ENCODE measurements at regions of chr16 and their contacts with region 1.

Region 1: DNA sequence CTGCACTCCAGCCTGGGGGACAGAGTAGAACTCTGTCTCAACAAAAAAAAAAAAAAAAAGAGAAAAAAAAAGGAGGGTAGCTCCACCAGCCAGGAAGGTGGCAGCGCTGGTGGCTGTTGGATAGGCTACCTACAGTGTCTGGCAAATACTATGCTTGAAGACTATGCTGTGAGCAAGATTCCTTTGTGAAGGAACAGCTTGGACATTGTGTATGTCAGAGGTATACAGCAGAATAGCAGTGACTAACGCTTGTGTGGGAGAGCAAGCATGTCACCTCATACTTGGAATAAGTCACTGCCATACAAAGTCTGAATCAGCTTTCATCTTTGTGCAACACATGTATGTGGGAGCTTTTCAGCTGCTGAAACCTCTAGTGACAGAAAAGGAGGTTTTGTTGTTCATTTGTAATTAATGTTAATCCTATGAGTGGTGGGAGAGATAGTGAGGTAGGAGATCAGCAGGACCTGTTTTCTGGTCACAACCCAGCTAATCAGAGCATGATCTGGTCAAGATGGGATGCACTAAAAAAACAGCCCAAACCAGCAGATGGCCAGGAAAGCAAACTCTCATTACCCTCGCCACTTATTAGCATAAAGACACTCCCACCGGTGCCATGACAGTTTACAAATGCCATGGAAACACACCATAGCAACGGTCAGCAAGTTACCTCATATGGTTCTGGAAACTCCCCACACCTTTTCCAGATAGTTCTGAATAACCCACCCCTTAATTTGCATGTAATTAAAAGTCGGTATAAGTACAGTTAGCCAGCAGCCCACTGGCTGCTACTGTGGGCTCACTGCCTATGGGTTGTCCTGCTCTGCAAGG is 6.8 kb upstream of the ITGAD start:
- DNase-seq: no peak
- H3K4me3 Mint-ChIP-seq: no peak overlapping the region
- H3K27ac Mint-ChIP-seq: peak overlapping the region; percentile 38
- H3K4me1 Mint-ChIP-seq: peaks cover 37% of the 10 kb centered on the region
- H3K27me3 Mint-ChIP-seq: peaks cover 6% of the 10 kb centered on the region

Region 2: GRCh38 chr16:31253642-31254045 is 132.7 kb before region 1 on chr16:
- intact Hi-C with region 1: no loop called
- DNase-seq: peak; percentile 34
- H3K4me3 Mint-ChIP-seq: peak overlapping the region; percentile 72
- H3K27ac Mint-ChIP-seq: peak overlapping the region; percentile 93
- H3K4me1 Mint-ChIP-seq: peaks cover 42% of the 10 kb centered on the region
- H3K27me3 Mint-ChIP-seq: no peaks in the 10 kb centered on the region

Region 3: DNA sequence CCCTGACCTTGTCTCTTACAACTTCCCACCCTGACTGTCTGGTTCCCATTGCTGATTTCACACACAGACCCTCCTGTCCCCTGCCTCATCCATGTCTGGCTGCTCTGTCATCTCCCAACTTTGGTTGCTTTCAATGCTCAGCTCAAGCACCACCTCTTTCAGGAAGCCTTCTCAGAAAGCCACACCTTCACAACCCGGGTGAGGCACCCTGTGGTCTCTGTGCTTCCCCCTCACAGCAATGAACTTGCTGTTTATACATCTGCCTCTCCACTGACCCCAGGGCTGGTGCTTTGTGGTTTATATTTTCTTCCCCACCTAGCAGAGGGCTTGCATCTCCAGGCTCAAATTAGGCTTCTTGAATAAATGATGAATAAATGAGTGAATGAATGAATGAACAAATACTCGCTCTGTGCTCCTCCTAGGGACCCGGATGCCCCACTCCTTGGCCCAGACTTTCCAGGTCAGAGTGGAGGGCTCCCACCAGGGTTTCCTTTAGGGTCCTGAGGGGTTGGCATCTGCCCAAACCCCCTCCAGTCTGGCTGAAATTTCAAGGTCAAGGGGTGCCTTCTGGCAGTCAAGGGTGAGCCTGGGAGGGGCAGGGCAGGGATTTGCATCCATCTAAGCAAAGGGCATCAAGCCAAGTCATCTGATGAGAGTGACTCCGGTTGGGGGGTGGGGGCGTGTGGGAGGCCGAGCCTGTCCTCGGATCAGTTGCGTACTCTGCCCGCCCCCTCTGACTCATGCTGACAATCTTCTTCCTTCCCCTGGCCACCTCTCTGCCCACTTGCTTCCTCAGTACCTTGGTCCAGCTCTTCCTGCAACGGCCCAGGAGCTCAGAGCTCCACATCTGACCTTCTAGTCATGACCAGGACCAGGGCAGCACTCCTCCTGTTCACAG is 31.7 kb before region 1 on chr16 and contains the start of gene ITGAX:
- intact Hi-C with region 1: loop called (anchors 1 kb)
- DNase-seq: peak; percentile 64
- H3K4me3 Mint-ChIP-seq: peak within 1 kb of the TSS; percentile 86
- H3K27ac Mint-ChIP-seq: peak within 1 kb of the TSS; percentile 97
- H3K4me1 Mint-ChIP-seq: peaks cover 62% of the 10 kb centered on the region
- H3K27me3 Mint-ChIP-seq: no peaks in the 10 kb centered on the region
- total RNA-seq, gene ITGAX: 56.2 and 56.9 TPM in 2 replicates

Region 4: DNA sequence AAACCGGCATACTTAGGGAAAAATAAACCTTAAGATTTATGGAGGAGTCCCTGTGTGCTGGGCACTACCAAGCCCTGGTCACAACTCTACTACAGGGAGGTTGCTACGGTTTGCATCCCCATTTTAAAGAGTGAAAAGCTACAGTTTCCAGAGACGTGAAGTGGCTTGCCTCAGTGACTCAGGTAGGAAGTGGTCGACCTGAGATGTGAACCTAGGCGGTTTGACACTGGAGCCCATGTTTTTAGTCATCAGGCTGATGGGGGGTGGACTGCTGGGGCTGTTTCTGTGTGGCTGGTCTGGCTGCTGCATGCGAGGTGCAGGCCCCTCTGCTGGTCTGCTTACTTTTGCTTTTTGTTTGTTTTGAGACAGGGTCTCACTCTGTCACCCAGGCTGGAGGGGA is 35.2 kb after region 1 on chr16:
- intact Hi-C with region 1: loop called (anchors 1 kb)
- DNase-seq: peak; percentile 63
- H3K4me3 Mint-ChIP-seq: peak overlapping the region; percentile 55
- H3K27ac Mint-ChIP-seq: peak overlapping the region; percentile 77
- H3K4me1 Mint-ChIP-seq: peaks cover 54% of the 10 kb centered on the region
- H3K27me3 Mint-ChIP-seq: no peaks in the 10 kb centered on the region

Region 5: GRCh38 chr16:31440516-31441184 is 54.3 kb after region 1 on chr16:
- intact Hi-C with region 1: loop called (anchors 2 kb)
- DNase-seq: no peak
- H3K4me3 Mint-ChIP-seq: no peak overlapping the region
- H3K27ac Mint-ChIP-seq: no peak overlapping the region
- H3K4me1 Mint-ChIP-seq: peaks cover 25% of the 10 kb centered on the region
- H3K27me3 Mint-ChIP-seq: no peaks in the 10 kb centered on the region

Region 6: GRCh38 chr16:31487720-31488467 is 101.5 kb after region 1 on chr16:
- intact Hi-C with region 1: no loop called
- DNase-seq: peak; percentile 50
- H3K4me3 Mint-ChIP-seq: peak overlapping the region; percentile 82
- H3K27ac Mint-ChIP-seq: no peak overlapping the region
- H3K4me1 Mint-ChIP-seq: peaks cover 3% of the 10 kb centered on the region
- H3K27me3 Mint-ChIP-seq: peaks cover 8% of the 10 kb centered on the region

Measured in activated T-helper 2 cell treated with anti-CD3 and anti-CD28 coated beads, Interferon-gamma antibody, Interleukin-2, Interleukin-4, amounts not matched to agents 10 μg/mL and 5 μg/mL and 100 μg/mL, durations not matched to agents 14 hours and 24 hours and 36 hours (primary cell).